Activated CD4-positive, alpha-beta memory T cell treated with anti-CD3 and anti-CD28 coated beads for 36 hours (primary cell): ENCODE measurements at regions of chr2 and their contacts with region 1.

Region 1: GRCh38 chr2:3223080-3223923 is 154.3 kb downstream of the EIPR1 start:
- DNase-seq: peak; percentile 97
- H3K4me3 Mint-ChIP-seq: peak overlapping the region; percentile 45
- H3K27ac Mint-ChIP-seq: peak overlapping the region; percentile 100
- H3K4me1 Mint-ChIP-seq: peaks cover 51% of the 10 kb centered on the region
- H3K27me3 Mint-ChIP-seq: no peaks in the 10 kb centered on the region

Region 2: GRCh38 chr2:3010001-3010400 is 213.3 kb before region 1 on chr2:
- CTCF ChIA-PET with region 1: no interaction called
- POLR2A ChIA-PET with region 1: no interaction called
- intact Hi-C with region 1: no loop called
- DNase-seq: no peak
- H3K4me3 Mint-ChIP-seq: no peak overlapping the region
- H3K27ac Mint-ChIP-seq: no peak overlapping the region
- H3K4me1 Mint-ChIP-seq: no peaks in the 10 kb centered on the region
- H3K27me3 Mint-ChIP-seq: peaks cover 27% of the 10 kb centered on the region

Region 3: DNA sequence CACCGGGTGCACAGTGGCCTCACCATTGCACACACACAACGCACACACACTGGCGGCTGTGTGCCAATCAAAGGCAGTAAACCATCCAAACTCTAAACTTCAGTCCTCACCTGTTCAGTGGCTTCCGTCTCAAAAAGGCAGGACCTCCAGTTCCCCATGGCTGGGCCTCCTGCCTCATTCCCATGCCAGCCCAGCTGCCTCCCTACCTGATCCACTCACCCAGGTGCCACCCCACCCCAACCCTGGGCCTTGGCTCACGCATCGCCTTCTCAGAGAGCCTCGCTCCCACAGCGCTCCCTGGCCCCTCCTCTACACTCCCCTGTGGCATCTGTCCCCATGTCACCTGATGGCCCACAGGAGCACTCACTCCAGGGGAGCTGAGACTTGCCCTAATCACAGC is 36.5 kb before region 1 on chr2:
- CTCF ChIA-PET with region 1: no interaction called
- POLR2A ChIA-PET with region 1: no interaction called
- intact Hi-C with region 1: no loop called
- DNase-seq: no peak
- H3K4me3 Mint-ChIP-seq: no peak overlapping the region
- H3K27ac Mint-ChIP-seq: no peak overlapping the region
- H3K4me1 Mint-ChIP-seq: no peaks in the 10 kb centered on the region
- H3K27me3 Mint-ChIP-seq: no peaks in the 10 kb centered on the region

Region 4: DNA sequence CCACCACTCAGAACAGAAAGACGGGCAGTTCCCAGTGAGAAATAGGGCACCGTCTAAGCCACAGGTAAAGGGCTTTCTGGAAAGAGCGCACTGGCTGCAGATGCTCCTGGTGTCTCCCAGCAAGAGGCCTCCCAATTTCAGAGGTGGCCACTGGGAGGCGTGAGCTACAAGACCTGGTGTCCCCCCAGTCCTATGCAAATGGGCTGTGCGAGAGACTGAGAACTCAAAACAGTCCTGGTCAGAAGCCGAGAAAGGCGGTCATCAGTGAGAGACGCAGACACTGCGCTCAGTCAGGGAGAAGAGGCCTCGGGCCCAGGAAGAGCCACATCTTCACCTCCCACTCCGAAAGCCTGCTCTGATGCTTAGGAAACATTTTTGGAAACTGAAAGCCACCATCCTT is 25.2 kb before region 1 on chr2:
- CTCF ChIA-PET with region 1: interaction called, 8 read pairs
- POLR2A ChIA-PET with region 1: no interaction called
- intact Hi-C with region 1: loop called (anchors 2 kb)
- DNase-seq: peak; percentile 68
- H3K4me3 Mint-ChIP-seq: peak overlapping the region; percentile 40
- H3K27ac Mint-ChIP-seq: peak overlapping the region; percentile 78
- H3K4me1 Mint-ChIP-seq: peaks cover 14% of the 10 kb centered on the region
- H3K27me3 Mint-ChIP-seq: no peaks in the 10 kb centered on the region

Region 5: DNA sequence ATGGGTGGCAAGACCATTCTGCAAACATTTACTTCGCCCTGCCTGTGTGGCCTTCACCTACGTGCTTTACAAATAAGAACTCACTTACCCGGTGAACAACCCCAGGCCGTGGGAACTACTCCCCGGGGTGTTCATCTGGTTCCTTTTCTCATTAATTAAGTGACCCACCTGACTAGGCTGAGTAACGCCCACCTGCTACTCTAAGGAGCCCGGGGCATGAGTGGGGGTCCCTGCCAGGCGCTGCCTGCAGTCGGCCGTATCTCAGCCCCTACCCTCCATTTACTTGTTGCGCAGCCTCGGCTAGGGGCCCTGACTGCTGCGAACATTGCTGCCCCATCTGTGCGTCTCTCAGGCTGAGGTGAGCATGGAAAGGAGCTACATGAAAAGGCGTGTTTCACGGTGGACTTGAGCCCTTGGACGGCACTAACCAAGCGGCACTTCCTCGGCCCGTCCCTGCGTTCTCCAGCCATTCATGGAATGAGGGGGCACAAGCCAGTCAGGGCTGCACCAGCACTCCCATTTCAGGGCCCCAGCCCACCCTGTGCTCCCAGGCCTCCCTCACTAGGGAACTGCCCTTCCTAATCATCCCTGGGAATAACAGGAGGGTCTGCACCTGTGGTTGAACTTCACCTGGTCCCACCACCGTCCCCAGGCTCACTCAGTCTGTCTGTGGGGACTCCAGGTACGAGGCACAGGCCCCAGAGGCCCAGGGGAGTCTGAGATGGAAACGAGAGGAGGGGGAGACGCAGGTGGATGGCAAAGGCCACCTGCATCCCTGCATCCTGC is 54.4 kb after region 1 on chr2:
- CTCF ChIA-PET with region 1: no interaction called
- POLR2A ChIA-PET with region 1: no interaction called
- intact Hi-C with region 1: loop called (anchors 2 kb)
- DNase-seq: no peak
- H3K4me3 Mint-ChIP-seq: no peak overlapping the region
- H3K27ac Mint-ChIP-seq: no peak overlapping the region
- H3K4me1 Mint-ChIP-seq: peaks cover 9% of the 10 kb centered on the region
- H3K27me3 Mint-ChIP-seq: no peaks in the 10 kb centered on the region

Region 6: GRCh38 chr2:3293221-3293620 is 69.9 kb after region 1 on chr2:
- CTCF ChIA-PET with region 1: no interaction called
- POLR2A ChIA-PET with region 1: no interaction called
- intact Hi-C with region 1: no loop called
- DNase-seq: no peak
- H3K4me3 Mint-ChIP-seq: no peak overlapping the region
- H3K27ac Mint-ChIP-seq: no peak overlapping the region
- H3K4me1 Mint-ChIP-seq: no peaks in the 10 kb centered on the region
- H3K27me3 Mint-ChIP-seq: no peaks in the 10 kb centered on the region

Region 7: DNA sequence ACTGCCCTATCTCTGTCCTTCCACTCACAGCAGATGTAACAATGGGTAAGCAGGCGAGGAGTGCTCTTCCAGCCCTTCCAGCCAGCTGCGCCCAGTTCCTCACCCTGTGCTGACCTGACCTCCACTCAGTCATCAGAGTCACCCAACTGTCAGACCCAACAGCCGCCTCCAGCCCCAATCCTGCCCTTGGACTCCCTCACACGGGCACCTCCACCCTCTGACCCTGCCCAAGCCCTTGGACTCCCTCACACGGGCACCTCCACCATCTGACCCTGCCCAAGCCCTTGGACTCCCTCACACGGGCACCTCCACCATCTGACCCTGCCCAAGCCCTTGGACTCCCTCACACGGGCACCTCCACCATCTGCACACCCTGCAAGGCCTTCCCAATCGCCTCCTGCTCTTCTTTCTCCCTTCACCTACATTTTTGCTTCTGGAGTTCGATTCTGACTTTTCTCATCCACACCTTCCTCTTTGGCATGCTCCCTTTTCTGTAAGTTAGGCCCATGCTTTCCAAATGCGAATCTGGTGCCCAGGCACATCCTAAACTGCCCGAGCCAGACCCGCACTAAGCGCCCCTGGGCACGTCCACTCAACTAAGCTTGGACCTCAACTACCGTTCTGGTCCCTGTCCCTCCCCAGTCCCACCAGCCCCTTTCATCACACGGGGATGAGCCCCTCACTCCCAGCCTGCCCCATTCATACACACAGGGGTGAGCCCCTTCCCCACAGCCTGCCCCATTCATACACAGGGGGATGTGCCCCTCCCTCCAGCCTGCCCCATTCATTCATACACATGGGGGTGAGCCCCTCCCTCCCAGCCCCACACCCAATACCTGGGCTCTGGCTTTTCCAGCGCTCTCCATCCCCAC is 138.5 kb after region 1 on chr2:
- CTCF ChIA-PET with region 1: no interaction called
- POLR2A ChIA-PET with region 1: no interaction called
- intact Hi-C with region 1: no loop called
- DNase-seq: no peak
- H3K4me3 Mint-ChIP-seq: no peak overlapping the region
- H3K27ac Mint-ChIP-seq: no peak overlapping the region
- H3K4me1 Mint-ChIP-seq: peaks cover 17% of the 10 kb centered on the region
- H3K27me3 Mint-ChIP-seq: no peaks in the 10 kb centered on the region

Region 8: GRCh38 chr2:3379647-3380534 is 156.6 kb after region 1 on chr2 and contains the start of gene TRAPPC12:
- CTCF ChIA-PET with region 1: interaction called, 7 read pairs
- POLR2A ChIA-PET with region 1: interaction called, 5 read pairs
- intact Hi-C with region 1: loop called (anchors 1 kb)
- DNase-seq: peak; percentile 95
- H3K4me3 Mint-ChIP-seq: peak within 1 kb of the TSS; percentile 98
- H3K27ac Mint-ChIP-seq: peak within 1 kb of the TSS; percentile 97
- H3K4me1 Mint-ChIP-seq: peaks cover 39% of the 10 kb centered on the region
- H3K27me3 Mint-ChIP-seq: no peaks in the 10 kb centered on the region
- total RNA-seq, gene TRAPPC12: 61.4 to 64.3 TPM

Region 9: GRCh38 chr2:3558205-3559014 is 335.1 kb after region 1 on chr2 and contains the start of gene RNASEH1:
- CTCF ChIA-PET with region 1: no interaction called
- POLR2A ChIA-PET with region 1: interaction called, 4 read pairs
- intact Hi-C with region 1: loop called (anchors 2 kb)
- DNase-seq: peak; percentile 99
- H3K4me3 Mint-ChIP-seq: peak within 1 kb of the TSS; percentile 86
- H3K27ac Mint-ChIP-seq: peak within 1 kb of the TSS; percentile 93
- H3K4me1 Mint-ChIP-seq: peaks cover 30% of the 10 kb centered on the region
- H3K27me3 Mint-ChIP-seq: no peaks in the 10 kb centered on the region
- total RNA-seq, gene RNASEH1: 23.6 to 24.8 TPM